Sigmoid colon (tissue), 7 donors: ENCODE measurements at regions of chr11 and their contacts with region 1.

Region 1: DNA sequence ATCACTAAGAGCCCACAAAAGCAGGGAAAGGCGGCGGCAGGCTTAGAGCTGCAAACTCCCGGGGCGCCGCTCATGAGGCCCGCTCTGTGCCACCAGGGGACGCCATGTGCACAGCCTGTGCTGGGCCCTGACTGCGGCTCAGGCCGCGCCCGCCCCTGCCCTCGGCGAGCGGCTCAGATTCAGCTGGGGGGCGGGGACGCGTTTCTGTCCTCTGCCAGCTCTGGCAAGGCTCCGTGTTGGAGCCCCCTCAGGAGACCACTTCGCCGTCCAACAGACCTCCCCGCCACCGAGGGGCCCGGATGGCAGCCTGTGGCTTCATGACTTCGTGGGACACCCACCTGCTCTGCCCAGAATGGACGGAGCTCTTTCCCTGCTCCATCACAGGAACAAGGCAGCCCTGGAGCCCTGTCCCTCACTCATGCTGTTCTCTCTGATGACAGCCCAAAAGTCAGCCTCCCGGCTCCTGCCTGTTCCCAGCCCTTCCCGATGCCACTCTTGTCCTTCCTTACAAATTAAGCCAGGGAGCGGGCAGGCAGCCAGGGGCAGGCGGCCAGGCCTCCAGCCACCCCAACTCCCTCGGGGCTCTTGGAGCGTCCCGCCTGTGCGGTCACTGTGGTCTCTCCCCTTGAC is 69.1 kb downstream of the NAT10 start:
- DNase-seq: peak; percentile 90
- H3K4me3 ChIP-seq: peak overlapping the region in 3 of 4 donors; percentile 23 to 39 (median 33)
- H3K27ac ChIP-seq: peak overlapping the region in 1 of 4 donors; percentile 48
- H3K4me1 ChIP-seq: peaks cover 0 to 12% (median 7%) of the 10 kb centered on the region in 4 donors
- H3K27me3 ChIP-seq: no peaks in the 10 kb centered on the region
- CTCF ChIP-seq: peak; percentile 94 to 97 (median 94)
- EP300 ChIP-seq: no peak
- POLR2A ChIP-seq: no peak

Region 2: DNA sequence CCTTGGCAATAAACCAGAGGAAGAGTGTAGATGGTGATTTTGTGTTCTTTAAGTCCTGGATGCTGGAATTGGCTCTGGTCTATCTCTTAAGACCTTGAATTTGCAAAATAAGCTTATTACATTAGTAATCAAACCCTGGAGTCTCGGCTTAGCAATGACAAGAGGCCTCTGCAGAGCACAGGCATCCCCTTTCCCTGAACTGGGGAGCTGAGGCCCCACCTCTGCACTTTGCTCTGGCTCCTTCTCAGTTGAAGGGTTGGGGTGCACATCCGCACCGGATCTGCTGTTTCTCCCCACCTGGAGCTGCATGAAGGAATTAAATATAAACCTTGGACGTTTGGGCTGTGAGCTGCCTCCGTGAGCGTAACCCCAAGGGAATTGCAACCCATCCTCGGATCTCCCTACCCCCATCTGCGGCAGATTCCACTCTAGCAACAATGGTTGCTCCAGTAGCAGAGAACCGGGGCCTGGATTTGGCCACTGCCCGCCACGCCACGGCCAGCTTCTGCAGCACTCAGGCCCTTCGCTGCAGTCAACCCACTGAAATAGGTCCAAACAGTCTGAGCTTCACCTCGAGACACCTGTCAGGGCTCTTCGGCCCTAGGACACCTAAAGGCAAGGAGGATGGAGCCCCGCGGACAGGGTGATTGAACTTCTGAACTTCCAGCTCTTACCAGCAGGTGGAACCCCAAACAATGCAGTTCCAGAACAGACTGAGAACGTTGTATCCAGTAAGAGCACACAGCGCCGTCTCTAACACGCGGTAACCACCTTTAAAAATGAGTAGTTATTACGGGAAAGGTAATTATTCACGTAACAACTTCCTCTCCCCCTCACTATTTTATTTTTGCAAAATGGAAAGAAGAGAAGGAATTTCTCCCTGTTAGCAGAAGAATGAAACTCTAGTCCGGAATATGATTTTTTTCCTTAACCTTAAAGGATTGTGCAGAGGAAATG is 177.8 kb before region 1 on chr11:
- intact Hi-C with region 1: loop called (anchors 2 kb)
- DNase-seq: peak; percentile 74
- H3K4me3 ChIP-seq: no peak overlapping the region
- H3K27ac ChIP-seq: no peak overlapping the region
- H3K4me1 ChIP-seq: peaks cover 0 to 12% (median 4%) of the 10 kb centered on the region in 4 donors
- H3K27me3 ChIP-seq: no peaks in the 10 kb centered on the region
- CTCF ChIP-seq: peak; percentile 55 to 84 (median 80)
- EP300 ChIP-seq: no peak
- POLR2A ChIP-seq: no peak

Region 3: GRCh38 chr11:34223021-34223813 is 48.7 kb after region 1 on chr11:
- intact Hi-C with region 1: loop called (anchors 5 kb)
- DNase-seq: peak; percentile 94
- H3K4me3 ChIP-seq: no peak overlapping the region
- H3K27ac ChIP-seq: peak overlapping the region; percentile 0 to 57 (median 48)
- H3K4me1 ChIP-seq: peaks cover 0 to 28% (median 16%) of the 10 kb centered on the region in 4 donors
- H3K27me3 ChIP-seq: no peaks in the 10 kb centered on the region
- CTCF ChIP-seq: no peak
- EP300 ChIP-seq: peak in 3 of 4 donors; percentile 8 to 59 (median 49)
- POLR2A ChIP-seq: no peak

Region 4: GRCh38 chr11:34266090-34266912 is 91.8 kb after region 1 on chr11:
- intact Hi-C with region 1: loop called (anchors 10 kb)
- DNase-seq: peak; percentile 76
- H3K4me3 ChIP-seq: no peak overlapping the region
- H3K27ac ChIP-seq: peak overlapping the region; percentile 43 to 56 (median 44)
- H3K4me1 ChIP-seq: peaks cover 0 to 38% (median 32%) of the 10 kb centered on the region in 4 donors
- H3K27me3 ChIP-seq: no peaks in the 10 kb centered on the region
- CTCF ChIP-seq: no peak
- EP300 ChIP-seq: no peak
- POLR2A ChIP-seq: no peak

Region 5: DNA sequence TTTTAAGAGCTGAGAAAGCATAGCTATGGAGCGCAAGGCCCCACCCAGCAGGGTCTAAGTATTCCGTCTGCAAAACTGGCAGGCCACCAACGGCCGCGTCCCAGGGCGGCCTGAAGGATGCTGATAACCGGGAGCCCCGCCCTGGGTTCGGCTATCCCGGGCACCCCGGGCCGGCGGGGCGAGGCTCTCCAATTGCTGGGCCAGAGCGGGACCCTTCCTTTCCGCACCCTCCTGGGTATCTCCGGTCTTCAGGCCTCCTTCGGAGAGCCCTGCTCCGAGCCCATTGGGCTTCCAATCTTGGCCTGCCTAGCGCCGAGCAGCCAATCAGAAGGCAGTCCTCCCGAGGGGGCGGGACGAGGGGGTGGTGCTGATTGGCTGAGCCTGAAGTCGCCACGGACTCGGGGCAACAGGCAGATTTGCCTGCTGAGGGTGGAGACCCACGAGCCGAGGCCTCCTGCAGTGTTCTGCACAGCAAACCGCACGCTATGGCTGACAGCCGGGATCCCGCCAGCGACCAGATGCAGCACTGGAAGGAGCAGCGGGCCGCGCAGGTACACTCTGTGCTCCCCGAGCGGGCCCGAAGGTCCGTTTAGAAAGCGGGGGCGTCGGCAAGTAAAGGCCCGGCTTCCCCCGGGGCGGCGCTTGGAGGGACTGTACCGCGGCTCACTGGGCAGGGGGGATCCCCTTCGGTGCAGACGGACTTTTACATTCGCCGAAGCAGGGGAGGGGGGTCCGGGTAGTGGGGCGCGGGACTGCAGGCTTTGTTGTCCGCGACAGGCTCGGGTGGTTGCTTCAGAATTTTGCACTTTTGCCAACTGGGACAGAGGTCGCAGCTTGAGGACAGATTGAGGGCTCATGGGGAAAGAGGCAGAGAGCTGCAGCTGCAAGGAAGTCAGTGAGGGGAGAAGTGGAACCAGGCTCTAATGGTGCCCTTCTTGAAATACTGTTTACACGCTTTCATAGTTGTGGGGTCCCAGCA is 264.3 kb after region 1 on chr11 and contains the start of gene CAT:
- intact Hi-C with region 1: loop called (anchors 10 kb)
- DNase-seq: peak; percentile 99
- H3K4me3 ChIP-seq: peak within 1 kb of the TSS; percentile 67 to 90 (median 88)
- H3K27ac ChIP-seq: peak within 1 kb of the TSS; percentile 90 to 97 (median 92)
- H3K4me1 ChIP-seq: peaks cover 0 to 27% (median 19%) of the 10 kb centered on the region in 4 donors
- H3K27me3 ChIP-seq: no peaks in the 10 kb centered on the region
- CTCF ChIP-seq: no peak
- EP300 ChIP-seq: peak in 1 of 4 donors; percentile 19
- POLR2A ChIP-seq: peak in 1 of 2 donors; percentile 45
- total RNA-seq, gene CAT: 77.4 to 164 (median 103) TPM